ENCODE measurements at regions of chr1 and their contacts with region 1.

Region 1: DNA sequence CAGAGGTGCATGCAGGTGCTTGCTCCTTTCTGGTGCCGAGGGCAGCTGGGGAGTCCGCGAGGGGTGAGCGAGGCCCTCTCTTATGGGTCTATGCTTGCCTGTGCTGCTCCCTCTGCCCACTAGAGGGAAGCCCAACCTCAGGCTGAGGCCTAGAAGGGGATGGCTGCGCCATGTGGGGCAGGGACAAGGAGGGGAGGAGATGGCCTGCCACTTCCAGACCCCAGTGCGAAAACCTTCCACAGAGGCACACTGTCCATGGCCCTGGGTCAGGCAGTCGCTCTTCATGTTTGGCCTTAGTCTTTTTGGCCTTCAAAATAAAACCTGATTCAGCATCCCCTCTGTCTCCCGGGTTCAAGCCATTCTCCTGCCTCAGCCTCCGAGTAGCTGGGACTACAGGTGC is 14.0 kb downstream of the RHBG start:
- DNase-seq: peak; percentile 69 to 97 (median 83)

Region 2: GRCh38 chr1:156445789-156446263 is 62.8 kb after region 1 on chr1:
- intact Hi-C with region 1: loop called (anchors 1 kb)
- DNase-seq: peak; percentile 73 to 97 (median 88)

Region 3: DNA sequence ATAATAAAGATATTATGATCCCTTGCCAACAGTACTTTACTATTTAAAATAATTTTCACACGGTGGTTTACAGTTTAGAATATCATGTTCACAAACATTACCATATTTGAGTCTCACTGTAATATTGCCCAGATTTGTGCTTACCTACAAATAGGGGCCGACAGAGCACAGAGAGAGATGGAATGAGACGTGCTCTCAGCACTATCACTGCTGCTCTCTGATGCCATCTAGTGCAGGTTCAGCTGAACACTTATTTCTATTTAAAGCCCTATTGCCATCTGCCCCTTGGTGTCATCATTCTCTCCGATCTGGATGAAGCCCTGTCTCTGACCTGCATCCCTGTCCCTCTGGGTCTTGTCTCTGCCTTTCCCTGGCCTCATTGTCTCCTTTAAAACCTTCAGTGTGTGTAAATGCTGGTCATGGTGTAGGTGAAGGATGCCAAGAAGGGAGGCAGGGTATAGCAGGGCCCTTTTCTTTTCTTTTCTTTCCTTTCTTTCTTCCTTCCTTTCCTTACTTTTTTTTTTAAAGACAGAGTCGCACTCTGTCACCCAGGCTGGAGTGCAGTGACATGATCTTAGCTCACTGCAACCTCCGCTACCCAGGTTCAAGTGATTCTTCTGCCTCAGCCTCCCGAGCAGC is 225.1 kb after region 1 on chr1:
- intact Hi-C with region 1: loop called (anchors 2 kb)
- DNase-seq: peak in 3 of 10 donors; percentile 52 to 92 (median 61)

Region 4: GRCh38 chr1:156664767-156665411 is 281.9 kb after region 1 on chr1:
- intact Hi-C with region 1: no loop called
- DNase-seq: peak in 2 of 10 donors; percentile 40 to 84

Measured in posterior cingulate gyrus (tissue), 11 donors.